ENCODE measurements at regions of chr18 and their contacts with region 1.

Region 1: DNA sequence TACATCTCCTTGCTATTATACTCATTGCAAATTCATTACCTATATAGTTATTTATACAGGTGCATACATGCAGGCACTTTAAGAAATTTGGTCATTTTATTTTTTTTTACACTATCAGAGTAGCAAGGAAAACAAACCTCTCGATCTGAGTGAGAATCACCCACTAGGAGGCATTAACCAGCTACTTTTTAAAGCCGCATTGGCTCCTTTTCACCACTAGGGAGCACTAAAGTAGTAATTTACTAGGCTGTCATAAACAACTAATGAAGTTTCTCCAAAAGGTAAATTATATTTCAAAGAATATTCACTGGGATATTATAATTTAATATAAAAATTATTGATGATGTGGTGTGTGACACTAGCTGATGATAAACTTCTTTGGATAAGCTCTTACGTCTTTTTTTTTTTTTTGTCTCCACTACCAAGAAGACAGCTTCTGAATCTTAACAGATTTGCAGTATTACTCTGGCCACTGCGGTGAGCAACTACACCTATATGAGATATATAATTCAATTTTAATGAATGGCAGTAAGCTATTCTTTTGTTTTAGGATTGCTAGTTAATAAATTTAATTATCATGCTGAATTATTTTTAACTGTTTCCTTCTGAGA is 101.9 kb downstream of the NOL4 start:
- DNase-seq: peak in 1 of 2 experiments; percentile 1
- H3K4me3 ChIP-seq: no peak overlapping the region
- H3K27ac ChIP-seq: no peak overlapping the region
- H3K4me1 ChIP-seq: peaks cover 9% of the 10 kb centered on the region; the same call in 1 of the 2 replicates
- H3K27me3 ChIP-seq: no peaks in the 10 kb centered on the region
- CTCF ChIP-seq: peak; percentile 71

Region 2: DNA sequence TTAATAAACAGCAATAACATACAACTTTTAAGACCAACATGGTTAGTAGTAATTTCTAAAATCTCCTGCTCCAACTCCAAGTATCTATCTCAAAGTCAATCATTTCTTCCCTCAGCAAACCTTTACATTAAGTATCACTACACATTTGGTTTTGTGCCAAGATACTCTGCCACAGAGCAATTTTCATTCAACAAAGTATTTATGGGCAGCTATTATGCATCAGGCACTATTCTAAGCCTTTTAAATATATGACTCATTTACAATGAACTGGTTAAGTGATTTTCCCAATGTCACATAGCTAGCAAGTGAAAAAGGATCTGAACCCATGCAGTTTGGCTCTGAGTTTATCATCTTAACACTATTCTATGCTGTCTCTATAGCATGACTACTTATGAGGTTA is 162.4 kb before region 1 on chr18:
- CTCF ChIA-PET with region 1: no interaction called
- POLR2A ChIA-PET with region 1: no interaction called
- intact Hi-C with region 1: no loop called
- DNase-seq: no peak
- H3K4me3 ChIP-seq: no peak overlapping the region
- H3K27ac ChIP-seq: no peak overlapping the region
- H3K4me1 ChIP-seq: no peaks in the 10 kb centered on the region
- H3K27me3 ChIP-seq: no peaks in the 10 kb centered on the region
- CTCF ChIP-seq: no peak

Region 3: DNA sequence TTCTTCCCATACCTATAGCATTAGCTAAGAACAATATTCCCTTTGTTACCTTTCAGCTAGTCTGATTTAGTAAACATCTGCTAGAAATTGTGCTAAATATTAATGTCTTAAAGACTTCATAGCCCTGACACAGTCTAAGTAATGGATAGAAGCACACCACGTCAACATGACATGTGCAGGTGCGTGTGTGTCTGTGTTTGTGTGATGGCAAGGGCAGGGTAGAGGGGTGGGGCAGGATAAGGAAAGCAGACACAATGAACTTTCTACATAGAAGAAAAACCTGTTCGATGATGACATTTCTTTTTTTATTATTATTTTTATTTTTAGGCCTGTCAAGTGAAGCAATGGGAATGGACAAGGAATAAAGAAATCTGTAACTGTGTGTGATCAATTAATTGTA is 121.5 kb before region 1 on chr18:
- CTCF ChIA-PET with region 1: no interaction called
- POLR2A ChIA-PET with region 1: no interaction called
- intact Hi-C with region 1: no loop called
- DNase-seq: no peak
- H3K4me3 ChIP-seq: no peak overlapping the region
- H3K27ac ChIP-seq: no peak overlapping the region
- H3K4me1 ChIP-seq: no peaks in the 10 kb centered on the region
- H3K27me3 ChIP-seq: no peaks in the 10 kb centered on the region
- CTCF ChIP-seq: no peak

Region 4: DNA sequence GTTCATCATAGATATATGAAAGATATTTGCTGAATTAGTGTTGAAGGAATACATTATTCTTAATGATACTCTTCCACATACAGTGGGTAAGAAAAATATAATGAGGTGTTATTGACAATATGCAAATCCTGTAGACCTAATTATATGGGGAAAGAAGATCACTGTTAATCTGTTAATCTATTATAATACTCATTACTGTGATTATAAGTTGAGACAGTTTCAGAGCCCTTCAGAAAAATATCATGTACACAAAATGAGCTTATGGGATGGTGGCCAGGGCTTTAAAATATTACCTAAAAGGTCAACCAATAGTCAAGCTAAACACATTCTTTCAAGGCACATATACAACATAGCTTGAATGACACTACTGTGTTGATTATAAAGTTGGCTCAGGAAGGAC is 61.6 kb before region 1 on chr18:
- CTCF ChIA-PET with region 1: no interaction called
- POLR2A ChIA-PET with region 1: no interaction called
- intact Hi-C with region 1: no loop called
- DNase-seq: no peak
- H3K4me3 ChIP-seq: no peak overlapping the region
- H3K27ac ChIP-seq: no peak overlapping the region
- H3K4me1 ChIP-seq: no peaks in the 10 kb centered on the region
- H3K27me3 ChIP-seq: no peaks in the 10 kb centered on the region
- CTCF ChIP-seq: no peak

Region 5: DNA sequence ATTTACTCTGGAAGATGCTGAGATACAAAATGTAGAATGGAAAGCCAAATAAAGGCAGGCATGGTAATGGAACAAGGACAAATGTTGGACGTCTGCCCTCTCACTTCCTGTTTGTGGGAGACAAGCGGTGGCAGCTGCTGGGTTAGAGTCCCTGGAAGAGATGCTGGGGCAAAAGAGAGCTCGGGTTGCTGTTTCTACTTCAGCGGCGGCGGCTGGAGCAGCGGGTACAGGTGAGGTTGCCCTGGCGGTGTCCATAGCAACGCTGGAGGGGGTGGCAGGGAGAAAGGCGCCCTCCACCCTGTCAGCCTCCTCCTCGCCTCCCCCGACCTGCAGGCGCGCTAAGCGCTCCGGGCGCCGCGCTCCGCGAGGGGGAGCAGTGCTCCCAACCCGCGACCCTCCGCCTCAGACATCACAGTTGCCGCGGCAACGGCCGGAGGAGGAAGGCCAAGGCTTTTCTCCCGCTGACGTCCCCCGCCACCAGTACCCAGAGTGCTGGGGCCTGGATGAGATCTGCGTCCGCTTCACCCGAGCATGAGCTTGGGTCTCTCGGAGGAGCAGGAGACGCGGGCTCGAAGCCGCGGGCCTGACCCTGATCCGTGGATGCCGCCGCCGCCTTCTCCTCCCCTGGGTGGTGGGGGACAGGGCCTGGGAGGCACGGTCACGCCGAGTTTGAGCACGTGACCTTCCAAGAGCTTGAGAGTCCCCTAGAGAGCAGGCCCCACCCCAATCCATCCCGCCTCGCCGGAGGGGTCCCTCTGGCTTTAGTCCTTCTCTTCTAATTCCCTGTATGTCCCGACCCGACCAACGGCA is 36.3 kb after region 1 on chr18:
- CTCF ChIA-PET with region 1: no interaction called
- POLR2A ChIA-PET with region 1: interaction called, 11 read pairs
- intact Hi-C with region 1: no loop called
- DNase-seq: no peak
- H3K4me3 ChIP-seq: no peak overlapping the region
- H3K27ac ChIP-seq: no peak overlapping the region
- H3K4me1 ChIP-seq: no peaks in the 10 kb centered on the region
- H3K27me3 ChIP-seq: no peaks in the 10 kb centered on the region
- CTCF ChIP-seq: no peak

Region 6: DNA sequence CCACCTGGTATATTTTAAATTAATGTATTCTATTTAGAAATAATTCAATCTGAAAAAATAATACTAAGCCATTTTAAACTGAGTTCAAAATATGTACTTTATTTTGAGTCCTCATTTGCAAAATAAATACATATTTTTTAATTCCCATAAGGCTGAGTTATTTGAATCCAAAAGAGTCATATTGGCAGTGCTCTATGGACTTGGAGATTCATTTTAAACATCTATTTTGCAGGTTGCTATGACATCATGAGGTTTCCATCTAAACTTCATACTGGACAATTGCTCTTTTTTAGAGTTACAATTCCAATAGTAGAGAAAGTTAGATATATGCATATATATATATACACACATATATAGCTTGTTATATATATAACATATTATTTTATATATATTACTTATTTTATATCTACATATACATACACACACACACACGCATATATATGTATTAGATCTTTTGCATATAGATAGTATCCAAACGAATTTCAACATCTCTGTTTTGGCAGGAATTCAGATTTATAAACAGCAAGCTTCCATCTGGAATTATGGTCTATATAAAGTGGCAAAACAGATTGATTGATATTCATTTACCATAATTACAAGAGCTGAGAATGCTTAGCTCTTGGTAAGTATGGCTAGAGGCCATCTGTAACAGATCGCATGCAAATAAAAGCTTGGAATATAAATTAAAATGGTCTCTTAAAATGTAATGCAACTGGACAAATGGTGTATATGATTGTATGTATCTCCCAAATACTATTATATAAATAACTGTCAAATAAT is 67.0 kb after region 1 on chr18:
- CTCF ChIA-PET with region 1: no interaction called
- POLR2A ChIA-PET with region 1: no interaction called
- intact Hi-C with region 1: no loop called
- DNase-seq: no peak
- H3K4me3 ChIP-seq: no peak overlapping the region
- H3K27ac ChIP-seq: no peak overlapping the region
- H3K4me1 ChIP-seq: no peaks in the 10 kb centered on the region
- H3K27me3 ChIP-seq: no peaks in the 10 kb centered on the region
- CTCF ChIP-seq: no peak